ENCODE measurements at regions of chr12 and their contacts with region 1.

Region 1: GRCh38 chr12:575948-576612 is 87.2 kb downstream of the NINJ2 start:
- DNase-seq: peak; percentile 96

Region 2: DNA sequence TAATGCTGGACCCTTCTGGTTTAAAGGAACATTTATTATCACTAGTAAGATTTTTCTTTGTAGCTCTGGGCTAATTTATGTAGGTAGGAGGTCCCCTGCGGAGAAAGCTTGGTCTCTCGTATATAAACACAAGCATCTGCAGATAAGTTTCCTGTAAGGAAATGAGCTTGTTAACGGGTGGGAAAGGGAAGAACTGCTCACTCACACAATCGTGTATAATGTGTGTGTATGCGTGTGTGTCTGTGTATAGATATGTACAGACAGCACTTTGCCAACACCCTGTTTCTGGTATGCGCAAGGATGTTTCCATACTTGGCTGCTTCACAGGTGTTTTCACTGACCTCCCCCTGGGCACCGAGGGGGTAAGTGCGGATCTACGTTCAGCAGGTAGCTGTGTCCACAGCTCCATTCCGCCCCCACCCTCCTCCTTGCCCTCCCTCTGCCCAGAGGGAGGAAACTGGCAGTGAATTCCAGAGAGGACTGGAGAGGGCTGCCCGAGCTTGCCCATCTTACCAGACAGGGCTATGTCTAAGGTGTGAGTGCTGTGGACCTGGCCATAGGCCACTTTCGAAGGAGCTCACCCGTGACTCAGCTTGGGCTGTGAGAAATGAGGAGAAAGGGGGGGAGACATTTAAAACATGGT is 22.0 kb after region 1 on chr12:
- intact Hi-C with region 1: no loop called
- DNase-seq: peak; percentile 43

Region 3: GRCh38 chr12:617304-617915 is 41.3 kb after region 1 on chr12:
- intact Hi-C with region 1: no loop called
- DNase-seq: peak; percentile 86

Region 4: GRCh38 chr12:642633-643474 is 66.8 kb after region 1 on chr12:
- intact Hi-C with region 1: loop called (anchors 5 to 10 kb)
- DNase-seq: peak; percentile 92

Region 5: GRCh38 chr12:751192-751998 is 175.3 kb after region 1 on chr12:
- intact Hi-C with region 1: loop called in 1 of 2 experiments (anchors 2 kb)
- DNase-seq: peak; percentile 97

Region 6: GRCh38 chr12:810671-811415 is 234.8 kb after region 1 on chr12:
- intact Hi-C with region 1: loop called (anchors 5 to 10 kb)
- DNase-seq: no peak